PC-3 (cell line): ENCODE measurements at regions of chrX and their contacts with region 1.

Region 1: DNA sequence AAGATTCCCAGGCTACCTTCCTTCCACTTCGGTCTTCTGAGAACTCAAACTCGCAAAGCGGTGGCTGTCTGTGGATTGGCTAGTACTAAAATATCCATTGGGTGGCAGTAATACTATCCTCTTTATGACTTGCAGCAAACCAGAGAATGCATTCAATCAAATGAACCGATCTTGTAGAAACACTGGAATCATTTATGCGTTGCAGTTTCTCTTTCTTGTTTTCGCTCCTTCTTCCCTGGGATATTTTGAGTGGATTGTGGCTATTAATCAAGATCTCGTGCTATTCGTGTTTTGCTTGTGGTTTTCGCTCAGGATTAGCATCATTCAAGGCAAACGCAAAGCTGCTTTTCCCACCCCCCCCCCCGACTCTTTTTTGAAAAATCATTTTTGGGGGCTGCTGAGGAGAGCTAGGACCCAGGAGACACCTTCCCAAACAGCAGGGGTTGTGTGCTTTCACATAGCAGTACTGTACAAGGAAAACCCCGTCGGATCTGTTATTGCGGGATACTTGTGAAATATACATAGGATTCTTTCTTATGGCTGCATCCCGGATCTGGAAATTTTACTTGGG is at the start of gene IL1RAPL1:
- DNase-seq: peak; percentile 67
- ATAC-seq: peak; percentile 66
- H3K4me3 ChIP-seq: peak within 1 kb of the TSS; percentile 66
- H3K27ac ChIP-seq: no peak within 1 kb of the TSS
- H3K4me1 ChIP-seq: peaks cover 26% of the 10 kb centered on the region
- H3K27me3 ChIP-seq: no peaks in the 10 kb centered on the region
- CTCF ChIP-seq: peak; percentile 53
- total RNA-seq, gene IL1RAPL1: 0.12 and 0.44 TPM in 2 replicates

Region 2: DNA sequence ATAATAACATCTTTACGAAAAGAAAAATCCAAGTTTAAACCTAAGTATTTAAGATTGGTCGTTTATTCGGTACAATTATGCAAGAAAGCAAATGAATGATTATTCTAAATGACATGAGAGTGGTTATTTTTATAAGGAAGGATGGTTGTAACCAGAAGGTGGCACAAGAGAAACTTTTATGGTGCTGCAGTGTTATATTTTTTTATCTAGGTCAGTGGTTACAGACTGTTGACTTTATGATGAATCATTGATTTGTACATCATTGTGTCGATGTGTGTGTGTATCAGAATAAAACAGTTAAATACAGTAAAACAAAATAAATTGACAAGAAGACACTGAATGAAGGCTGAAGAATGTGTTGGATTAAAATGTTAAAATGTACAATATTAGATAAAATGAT is 987.1 kb before region 1 on chrX:
- CTCF ChIA-PET with region 1: no interaction called
- POLR2A ChIA-PET with region 1: interaction called, 6 read pairs
- intact Hi-C with region 1: loop called (anchors 10 kb)
- DNase-seq: peak; percentile 73
- ATAC-seq: peak; percentile 90
- H3K4me3 ChIP-seq: peak overlapping the region; percentile 48
- H3K27ac ChIP-seq: peak overlapping the region; percentile 91
- H3K4me1 ChIP-seq: peaks cover 11% of the 10 kb centered on the region
- H3K27me3 ChIP-seq: no peaks in the 10 kb centered on the region
- CTCF ChIP-seq: peak; percentile 68

Region 3: DNA sequence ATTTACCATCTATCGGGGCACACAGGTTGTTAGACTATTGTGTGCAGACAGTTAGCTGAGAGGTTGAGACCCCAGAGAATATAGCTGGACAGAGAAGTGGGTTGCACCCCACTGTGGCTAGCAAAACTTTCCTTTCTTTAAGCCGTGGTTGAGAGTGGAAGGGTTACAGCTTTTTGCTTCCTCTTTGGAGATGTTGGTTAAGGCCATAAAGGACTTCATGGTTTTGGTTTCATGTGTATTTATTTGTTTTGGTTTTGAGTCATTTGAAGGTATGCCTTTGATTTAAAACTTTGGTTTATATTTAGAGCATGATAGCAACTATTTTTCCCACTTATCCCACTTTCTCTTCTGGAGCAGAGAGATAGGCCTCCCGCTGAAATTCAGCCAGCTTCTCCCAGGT is 274.1 kb before region 1 on chrX:
- CTCF ChIA-PET with region 1: no interaction called
- POLR2A ChIA-PET with region 1: no interaction called
- intact Hi-C with region 1: loop called (anchors 2 kb)
- DNase-seq: peak; percentile 61
- ATAC-seq: peak; percentile 78
- H3K4me3 ChIP-seq: 0 out of 2 replicates have a peak overlapping the region, but pooled peaks have one; percentile 23
- H3K27ac ChIP-seq: peak overlapping the region; percentile 88
- H3K4me1 ChIP-seq: peaks cover 26% of the 10 kb centered on the region
- H3K27me3 ChIP-seq: no peaks in the 10 kb centered on the region
- CTCF ChIP-seq: no peak

Region 4: DNA sequence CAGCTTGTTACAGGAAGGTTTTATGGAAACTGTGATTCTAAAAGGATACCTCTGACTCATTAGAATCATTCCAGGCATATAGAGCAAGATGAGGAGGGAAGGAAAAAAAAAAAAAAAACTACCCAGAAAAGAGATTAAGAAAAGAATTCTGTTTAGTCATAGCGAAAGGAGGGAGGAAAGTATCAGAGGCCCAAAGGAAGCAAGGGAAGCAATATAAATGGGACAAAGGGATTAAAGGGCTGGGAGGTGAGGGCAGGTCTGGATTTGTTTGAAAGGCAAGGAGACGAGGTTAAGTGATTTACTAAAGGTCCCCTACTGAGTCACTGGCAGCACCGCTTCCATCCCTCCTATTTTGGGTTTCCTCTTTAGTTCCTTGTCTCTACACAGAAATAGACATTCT is 88.4 kb before region 1 on chrX:
- CTCF ChIA-PET with region 1: no interaction called
- POLR2A ChIA-PET with region 1: no interaction called
- intact Hi-C with region 1: loop called (anchors 2 kb)
- DNase-seq: peak; percentile 45
- ATAC-seq: peak; percentile 73
- H3K4me3 ChIP-seq: no peak overlapping the region
- H3K27ac ChIP-seq: peak overlapping the region; percentile 40
- H3K4me1 ChIP-seq: peaks cover 16% of the 10 kb centered on the region
- H3K27me3 ChIP-seq: no peaks in the 10 kb centered on the region
- CTCF ChIP-seq: no peak

Region 5: GRCh38 chrX:28542791-28543190 is 44.3 kb before region 1 on chrX:
- CTCF ChIA-PET with region 1: no interaction called
- POLR2A ChIA-PET with region 1: no interaction called
- intact Hi-C with region 1: no loop called
- DNase-seq: no peak
- ATAC-seq: no peak
- H3K4me3 ChIP-seq: no peak overlapping the region
- H3K27ac ChIP-seq: no peak overlapping the region
- H3K4me1 ChIP-seq: no peaks in the 10 kb centered on the region; the same call in 1 of the 2 replicates
- H3K27me3 ChIP-seq: no peaks in the 10 kb centered on the region
- CTCF ChIP-seq: no peak

Region 6: GRCh38 chrX:29044423-29045184 is 457.5 kb after region 1 on chrX:
- CTCF ChIA-PET with region 1: no interaction called
- POLR2A ChIA-PET with region 1: no interaction called
- intact Hi-C with region 1: loop called (anchors 5 kb)
- DNase-seq: peak; percentile 18
- ATAC-seq: peak; percentile 42; the same call in 1 of the 2 replicates
- H3K4me3 ChIP-seq: no peak overlapping the region
- H3K27ac ChIP-seq: no peak overlapping the region
- H3K4me1 ChIP-seq: no peaks in the 10 kb centered on the region
- H3K27me3 ChIP-seq: no peaks in the 10 kb centered on the region
- CTCF ChIP-seq: peak; percentile 47